ENCODE measurements at regions of chr17 and their contacts with region 1.

Region 1: DNA sequence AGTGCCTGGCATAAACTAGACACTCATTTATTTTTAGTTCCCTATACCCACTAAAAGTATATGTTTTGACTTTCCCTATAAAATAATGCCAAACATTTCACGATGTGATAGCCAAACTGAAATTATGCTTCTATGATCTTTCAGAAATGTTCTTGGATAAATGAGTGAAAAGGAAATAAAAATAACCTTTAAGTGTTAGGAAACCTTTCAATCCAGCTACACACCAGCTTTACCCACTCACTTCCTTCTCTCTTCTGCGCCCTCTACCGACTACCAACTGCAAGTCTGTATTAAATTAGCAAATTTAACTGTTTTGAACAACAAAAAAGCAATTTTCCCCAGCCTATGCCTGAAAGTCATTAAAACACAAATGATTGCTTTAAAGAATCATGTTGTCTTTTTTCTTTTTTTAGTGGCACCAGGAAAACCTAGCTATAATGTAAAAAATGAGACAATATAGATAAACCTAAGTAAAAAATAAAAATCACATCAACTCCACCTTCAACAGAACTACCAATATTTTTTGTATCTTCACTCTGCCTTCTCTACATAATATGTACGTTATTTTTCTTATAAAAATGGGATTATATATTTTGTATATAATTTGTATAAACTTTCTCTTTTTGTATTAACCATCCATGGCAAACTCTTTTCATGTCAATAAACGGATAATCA is 13.2 kb upstream of the TMEM100 start:
- DNase-seq: peak; percentile 69
- H3K4me3 Mint-ChIP-seq: no peak overlapping the region
- H3K27ac Mint-ChIP-seq: no peak overlapping the region
- H3K4me1 Mint-ChIP-seq: peaks cover 41% of the 10 kb centered on the region
- H3K27me3 Mint-ChIP-seq: no peaks in the 10 kb centered on the region
- CTCF ChIP-seq: peak; percentile 50

Region 2: DNA sequence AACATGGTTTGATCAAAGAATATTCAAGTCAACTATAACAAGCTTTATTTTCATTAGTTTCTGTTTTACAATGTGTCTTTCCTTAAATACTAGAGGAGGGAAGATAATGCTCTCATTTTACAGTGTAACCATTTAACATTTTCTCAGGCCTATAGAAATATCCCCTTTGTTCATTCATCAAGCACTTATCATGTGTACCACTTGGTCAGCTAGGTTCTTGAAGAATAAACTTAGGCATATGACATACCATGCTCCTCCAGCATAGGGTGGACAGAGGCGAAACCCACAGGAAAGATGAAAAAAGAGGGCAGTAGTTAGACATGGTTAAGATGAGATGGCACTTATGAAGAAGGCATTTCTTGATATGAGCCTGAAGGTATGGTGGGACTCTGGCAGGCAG is 505.2 kb before region 1 on chr17:
- CTCF ChIA-PET with region 1: no interaction called
- POLR2A ChIA-PET with region 1: no interaction called
- intact Hi-C with region 1: no loop called
- DNase-seq: no peak
- H3K4me3 Mint-ChIP-seq: no peak overlapping the region
- H3K27ac Mint-ChIP-seq: no peak overlapping the region
- H3K4me1 Mint-ChIP-seq: peaks cover 9% of the 10 kb centered on the region
- H3K27me3 Mint-ChIP-seq: peaks cover 6% of the 10 kb centered on the region
- CTCF ChIP-seq: no peak

Region 3: GRCh38 chr17:55750750-55751657 is 15.1 kb after region 1 on chr17 and contains the start of gene PCTP:
- CTCF ChIA-PET with region 1: interaction called, 20 read pairs
- POLR2A ChIA-PET with region 1: interaction called, 18 read pairs
- intact Hi-C with region 1: no loop called
- DNase-seq: peak; percentile 96
- H3K4me3 Mint-ChIP-seq: peak within 1 kb of the TSS; percentile 80
- H3K27ac Mint-ChIP-seq: peak within 1 kb of the TSS; percentile 63
- H3K4me1 Mint-ChIP-seq: peaks cover 19% of the 10 kb centered on the region
- H3K27me3 Mint-ChIP-seq: no peaks in the 10 kb centered on the region
- CTCF ChIP-seq: peak; percentile 49
- total RNA-seq, gene PCTP: 10.2 and 11.9 TPM in 2 replicates

Region 4: GRCh38 chr17:55883149-55883548 is 147.3 kb after region 1 on chr17:
- CTCF ChIA-PET with region 1: no interaction called
- POLR2A ChIA-PET with region 1: no interaction called
- intact Hi-C with region 1: no loop called
- DNase-seq: no peak
- H3K4me3 Mint-ChIP-seq: no peak overlapping the region
- H3K27ac Mint-ChIP-seq: no peak overlapping the region
- H3K4me1 Mint-ChIP-seq: no peaks in the 10 kb centered on the region
- H3K27me3 Mint-ChIP-seq: peaks cover 3% of the 10 kb centered on the region
- CTCF ChIP-seq: no peak

Measured in MCF 10A (cell line).